Activated CD8-positive, alpha-beta memory T cell treated with anti-CD3 and anti-CD28 coated beads, Interleukin-2, amount 10 ng/mL, durations not matched to agents 7 days and 5 days (primary cell): ENCODE measurements at regions of chr2 and their contacts with region 1.

Region 1: GRCh38 chr2:232327105-232328041 is 51.2 kb upstream of the ALPP start:
- DNase-seq: peak; percentile 87
- ATAC-seq: peak; percentile 87
- H3K4me3 Mint-ChIP-seq: no peak overlapping the region
- H3K27ac Mint-ChIP-seq: no peak overlapping the region
- H3K4me1 Mint-ChIP-seq: peaks cover 8% of the 10 kb centered on the region
- H3K27me3 Mint-ChIP-seq: no peaks in the 10 kb centered on the region

Region 2: DNA sequence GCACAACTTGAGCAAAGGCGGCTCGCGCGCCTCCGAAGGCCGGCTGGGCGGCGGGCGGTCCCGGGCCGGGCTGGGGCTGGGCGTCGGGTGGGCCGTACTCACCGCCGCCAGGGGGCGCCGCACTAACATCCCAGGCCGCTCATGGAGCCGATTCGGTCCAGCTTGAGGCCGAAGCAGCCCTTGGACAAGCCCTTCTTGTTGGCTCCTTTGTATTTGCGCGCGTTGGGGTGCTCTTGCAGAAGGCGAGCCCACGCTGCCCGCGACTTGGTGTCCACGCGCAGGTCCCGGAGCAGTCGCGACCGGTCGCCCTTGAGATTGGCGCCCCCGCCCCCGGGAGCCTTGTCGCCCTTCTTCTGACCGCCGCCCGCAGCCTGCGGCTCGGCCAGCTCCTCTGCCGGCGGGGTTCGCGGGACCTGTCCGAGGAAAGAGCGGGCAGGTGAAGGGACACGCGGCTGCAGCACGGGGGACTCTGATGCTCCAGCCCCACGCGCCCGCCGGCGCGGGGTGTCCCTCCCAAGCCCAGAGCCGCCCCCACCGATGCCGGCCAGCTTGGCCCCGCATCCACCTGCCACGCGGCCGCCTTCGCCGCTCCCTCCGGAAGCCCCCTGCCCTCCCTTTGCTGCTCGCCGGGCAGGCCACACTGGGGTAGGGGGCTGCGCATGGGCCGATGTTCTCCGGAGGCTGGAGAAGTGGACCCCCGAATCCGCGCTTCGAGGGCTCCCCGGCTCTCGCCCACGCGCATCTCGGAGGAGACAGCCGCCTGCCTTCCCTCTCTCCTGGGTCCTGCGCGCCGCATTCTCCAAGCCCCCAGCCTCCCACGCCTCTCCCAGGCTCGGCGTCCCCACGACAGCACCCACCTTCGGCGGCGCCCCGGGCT is 401.8 kb before region 1 on chr2:
- CTCF ChIA-PET with region 1: interaction called, 153 read pairs
- DNase-seq: peak; percentile 73
- ATAC-seq: peak; percentile 73
- H3K4me3 Mint-ChIP-seq: peak overlapping the region; percentile 43
- H3K27ac Mint-ChIP-seq: no peak overlapping the region
- H3K4me1 Mint-ChIP-seq: peaks cover 9% of the 10 kb centered on the region
- H3K27me3 Mint-ChIP-seq: peaks cover 53% of the 10 kb centered on the region

Region 3: DNA sequence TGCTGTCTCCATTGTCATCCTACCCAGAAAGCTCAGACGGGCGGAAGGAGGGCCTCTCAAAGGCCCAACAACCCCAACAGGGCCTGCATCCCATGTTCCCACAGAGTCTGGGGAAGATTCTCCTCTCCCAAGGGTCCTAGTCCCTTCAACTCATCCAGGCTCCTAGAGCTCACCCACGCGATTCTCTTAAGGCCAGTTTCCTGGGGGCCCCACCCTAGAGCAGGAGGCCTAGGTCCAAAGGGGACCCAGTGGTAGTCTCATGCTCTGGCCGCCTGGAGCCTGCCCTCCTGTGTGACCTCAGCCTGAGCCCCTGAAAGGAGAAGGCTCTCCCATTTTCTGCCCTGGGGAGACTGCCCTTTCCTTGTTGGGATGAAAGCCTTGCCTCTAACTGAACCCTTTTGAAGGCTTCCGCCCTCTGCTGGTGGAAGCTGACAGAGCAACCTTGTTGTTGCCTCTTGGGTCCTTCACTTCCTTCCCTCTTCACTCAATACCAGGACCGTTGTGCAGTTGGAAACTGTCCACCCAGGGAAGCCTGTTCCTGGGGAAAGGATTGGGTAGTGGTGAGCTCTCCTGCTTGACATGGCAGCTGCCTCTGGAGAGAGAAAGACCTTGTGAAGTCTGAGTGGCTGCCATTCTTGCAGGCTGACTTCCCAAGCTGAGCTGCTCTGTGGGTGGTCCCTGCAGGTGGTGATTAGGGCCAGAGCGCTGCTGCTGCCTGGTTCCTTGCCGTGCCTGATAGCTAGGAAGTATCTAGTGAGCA is 34.8 kb before region 1 on chr2:
- CTCF ChIA-PET with region 1: interaction called, 69 read pairs
- DNase-seq: peak; percentile 78
- ATAC-seq: peak; percentile 84
- H3K4me3 Mint-ChIP-seq: no peak overlapping the region
- H3K27ac Mint-ChIP-seq: no peak overlapping the region
- H3K4me1 Mint-ChIP-seq: no peaks in the 10 kb centered on the region
- H3K27me3 Mint-ChIP-seq: no peaks in the 10 kb centered on the region

Region 4: GRCh38 chr2:232310121-232310520 is 17.3 kb before region 1 on chr2:
- CTCF ChIA-PET with region 1: interaction called, 40 read pairs
- DNase-seq: peak; percentile 61
- ATAC-seq: peak; percentile 63
- H3K4me3 Mint-ChIP-seq: no peak overlapping the region
- H3K27ac Mint-ChIP-seq: peak overlapping the region; percentile 82
- H3K4me1 Mint-ChIP-seq: peaks cover 56% of the 10 kb centered on the region
- H3K27me3 Mint-ChIP-seq: no peaks in the 10 kb centered on the region